Activated T-helper 2 cell treated with anti-CD3 and anti-CD28 coated beads, Interferon-gamma antibody, Interleukin-2, Interleukin-4, amounts not matched to agents 10 μg/mL and 5 μg/mL and 100 μg/mL, durations not matched to agents 14 hours and 24 hours and 36 hours (primary cell): ENCODE measurements at regions of chr1 and their contacts with region 1.

Region 1: GRCh38 chr1:18643154-18644012 is 12.7 kb downstream of the PAX7 start:
- DNase-seq: no peak
- H3K4me3 Mint-ChIP-seq: no peak overlapping the region
- H3K27ac Mint-ChIP-seq: no peak overlapping the region
- H3K4me1 Mint-ChIP-seq: peaks cover 4% of the 10 kb centered on the region
- H3K27me3 Mint-ChIP-seq: peaks cover 82% of the 10 kb centered on the region

Region 2: GRCh38 chr1:18109756-18110597 is 533.4 kb before region 1 on chr1:
- intact Hi-C with region 1: loop called (anchors 5 kb)
- DNase-seq: no peak
- H3K4me3 Mint-ChIP-seq: no peak overlapping the region
- H3K27ac Mint-ChIP-seq: no peak overlapping the region
- H3K4me1 Mint-ChIP-seq: no peaks in the 10 kb centered on the region
- H3K27me3 Mint-ChIP-seq: peaks cover 55% of the 10 kb centered on the region

Region 3: DNA sequence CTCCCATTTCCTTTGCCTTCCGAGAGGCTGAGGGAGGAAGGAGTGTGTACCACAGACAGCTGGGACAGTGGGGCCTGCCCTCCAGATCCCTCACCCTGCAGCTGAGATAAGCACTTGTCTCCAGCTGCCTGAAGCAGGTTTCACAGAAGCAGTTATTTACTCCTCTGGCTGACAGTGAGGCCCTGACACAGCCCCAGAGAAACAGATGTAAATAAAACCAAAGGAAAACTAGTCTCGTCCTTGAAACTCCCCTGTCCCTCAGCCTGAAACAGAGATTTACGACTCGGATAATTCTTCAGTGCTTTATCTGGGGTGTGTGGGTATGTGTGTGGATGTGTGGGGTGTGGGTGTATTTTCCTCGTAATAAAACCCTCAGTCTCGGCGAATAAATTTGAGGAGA is 354.7 kb before region 1 on chr1:
- intact Hi-C with region 1: no loop called
- DNase-seq: no peak
- H3K4me3 Mint-ChIP-seq: no peak overlapping the region
- H3K27ac Mint-ChIP-seq: no peak overlapping the region
- H3K4me1 Mint-ChIP-seq: no peaks in the 10 kb centered on the region
- H3K27me3 Mint-ChIP-seq: peaks cover 2% of the 10 kb centered on the region

Region 4: GRCh38 chr1:18618546-18619466 is 24.6 kb before region 1 on chr1:
- intact Hi-C with region 1: no loop called
- DNase-seq: no peak
- H3K4me3 Mint-ChIP-seq: no peak overlapping the region
- H3K27ac Mint-ChIP-seq: no peak overlapping the region
- H3K4me1 Mint-ChIP-seq: peaks cover 7% of the 10 kb centered on the region
- H3K27me3 Mint-ChIP-seq: peaks cover 16% of the 10 kb centered on the region